Heart right ventricle (tissue), 16 donors: ENCODE measurements at regions of chr12 and their contacts with region 1.

Region 1: GRCh38 chr12:16165506-16165905 is 112.0 kb downstream of the SLC15A5 start:
- DNase-seq: peak in 1 of 2 donors; percentile 11
- ATAC-seq: peak in 3 of 8 donors; percentile 44 to 71 (median 49)
- H3K4me3 ChIP-seq: no peak overlapping the region
- H3K27ac ChIP-seq: no peak overlapping the region
- H3K4me1 ChIP-seq: no peaks in the 10 kb centered on the region
- H3K27me3 ChIP-seq: peaks cover 0 to 5% (median 0%) of the 10 kb centered on the region in 7 donors
- CTCF ChIP-seq: peak in 7 of 9 donors; percentile 22 to 50 (median 42)

Region 2: DNA sequence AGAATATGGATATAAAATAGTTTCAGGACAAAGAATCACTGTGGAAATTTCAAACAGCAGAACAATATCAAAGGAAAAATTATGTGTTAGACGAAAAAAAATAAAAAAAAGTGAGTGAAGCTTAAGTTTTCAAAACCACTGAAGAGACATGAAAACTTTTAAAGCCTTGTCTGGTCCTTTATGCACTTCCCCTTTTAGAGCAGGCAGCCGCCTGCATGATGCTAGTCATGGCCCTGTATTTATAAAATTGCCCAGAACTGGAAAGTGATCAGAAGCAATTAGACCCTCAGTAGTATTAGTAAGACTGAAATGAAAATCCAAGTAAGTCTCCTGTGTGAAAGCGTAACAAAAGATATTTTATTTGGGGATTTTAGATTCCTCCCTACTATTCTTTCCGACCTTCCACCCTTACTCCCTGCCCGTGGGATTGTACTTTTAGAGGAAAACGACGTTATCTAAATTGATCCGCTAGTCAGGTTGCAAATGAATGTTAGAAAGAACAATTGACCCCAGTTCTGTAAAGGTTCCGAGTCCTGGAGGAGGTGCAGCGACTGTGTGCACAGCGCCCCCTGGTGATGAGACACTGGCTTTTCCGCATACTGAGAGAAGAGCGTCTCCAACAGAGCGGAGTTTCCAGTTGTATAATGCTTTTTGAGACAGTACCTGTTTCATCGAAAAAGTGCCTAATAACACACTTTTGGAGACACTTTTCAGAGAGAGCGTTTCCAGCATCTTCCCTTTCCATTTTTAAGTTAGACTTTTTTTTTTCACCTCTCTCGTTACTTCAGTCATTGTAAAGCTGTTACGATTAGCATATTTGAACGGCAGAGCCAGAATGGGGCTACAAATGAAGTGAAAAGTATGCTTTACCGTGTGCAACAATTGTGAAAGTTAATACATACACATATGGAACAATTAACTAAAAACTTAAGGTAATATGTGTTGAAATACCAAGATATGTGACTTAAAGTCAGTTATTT is 194.3 kb after region 1 on chr12:
- intact Hi-C with region 1: loop called in 5 of 10 experiments (anchors 5 to 10 kb)
- DNase-seq: peak; percentile 26 to 56
- ATAC-seq: peak in 2 of 8 donors; percentile 44 to 49
- H3K4me3 ChIP-seq: no peak overlapping the region
- H3K27ac ChIP-seq: no peak overlapping the region
- H3K4me1 ChIP-seq: peaks cover 0 to 8% (median 0%) of the 10 kb centered on the region in 9 donors
- H3K27me3 ChIP-seq: no peaks in the 10 kb centered on the region
- CTCF ChIP-seq: peak in 8 of 9 donors; percentile 45 to 69 (median 59)

Region 3: DNA sequence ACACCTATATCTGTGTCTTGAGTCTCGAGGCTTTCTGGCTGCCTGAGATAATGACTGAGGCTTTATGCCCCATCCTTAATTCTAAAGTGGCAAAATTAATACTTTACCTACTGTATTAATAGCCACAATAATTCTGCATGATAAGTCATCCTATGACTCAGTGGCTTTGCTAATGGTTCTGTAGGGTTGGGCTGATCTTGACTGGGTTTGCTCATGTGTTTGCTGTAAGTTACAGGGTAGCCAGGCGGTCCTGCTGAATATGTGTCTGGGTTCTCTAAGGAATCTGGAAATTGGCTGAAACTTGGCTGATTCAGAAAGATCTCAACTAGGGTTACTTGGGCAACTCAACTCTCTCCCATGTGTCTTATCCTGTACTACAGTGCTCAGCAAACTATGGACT is 203.7 kb after region 1 on chr12:
- intact Hi-C with region 1: loop called in 3 of 10 experiments (anchors 5 to 10 kb)
- DNase-seq: no peak
- ATAC-seq: no peak
- H3K4me3 ChIP-seq: no peak overlapping the region
- H3K27ac ChIP-seq: no peak overlapping the region
- H3K4me1 ChIP-seq: no peaks in the 10 kb centered on the region
- H3K27me3 ChIP-seq: no peaks in the 10 kb centered on the region
- CTCF ChIP-seq: no peak